Activated CD8-positive, alpha-beta T cell treated with anti-CD3 and anti-CD28 coated beads, Interleukin-2, amount 10 ng/mL, durations not matched to agents 7 days and 5 days (primary cell): ENCODE measurements at regions of chr11 and their contacts with region 1.

Region 1: GRCh38 chr11:57567515-57568329 is at the start of gene UBE2L6:
- DNase-seq: peak; percentile 72
- ATAC-seq: peak; percentile 76
- H3K4me3 Mint-ChIP-seq: peak within 1 kb of the TSS; percentile 97
- H3K27ac Mint-ChIP-seq: peak within 1 kb of the TSS; percentile 93
- H3K4me1 Mint-ChIP-seq: peaks cover 47% of the 10 kb centered on the region
- H3K27me3 Mint-ChIP-seq: no peaks in the 10 kb centered on the region
- total RNA-seq, gene UBE2L6: 222 to 232 TPM

Region 2: GRCh38 chr11:57539342-57539741 is 28.4 kb before region 1 on chr11:
- CTCF ChIA-PET with region 1: no interaction called
- POLR2A ChIA-PET with region 1: no interaction called
- DNase-seq: no peak
- ATAC-seq: no peak
- H3K4me3 Mint-ChIP-seq: no peak overlapping the region
- H3K27ac Mint-ChIP-seq: no peak overlapping the region
- H3K4me1 Mint-ChIP-seq: no peaks in the 10 kb centered on the region
- H3K27me3 Mint-ChIP-seq: no peaks in the 10 kb centered on the region

Region 3: DNA sequence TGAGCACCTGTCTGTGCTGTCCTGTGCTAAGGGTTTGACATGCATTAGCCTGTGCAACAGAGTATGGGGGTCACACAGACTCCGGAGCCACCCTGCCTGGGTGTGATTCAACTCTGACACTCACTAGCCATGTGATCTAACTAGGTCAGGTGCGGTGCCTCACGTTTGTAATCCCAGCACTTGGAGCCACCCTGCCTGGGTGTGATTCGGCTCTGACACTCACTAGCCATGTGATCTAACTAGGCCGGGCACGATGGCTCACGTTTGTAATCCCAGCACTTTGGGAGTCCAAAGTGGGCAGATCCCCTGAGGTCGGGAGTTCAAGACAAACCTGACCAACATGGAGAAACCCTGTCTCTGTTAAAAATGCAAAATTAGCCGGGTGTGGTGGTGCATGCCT is 11.7 kb before region 1 on chr11:
- CTCF ChIA-PET with region 1: interaction called, 15 read pairs
- POLR2A ChIA-PET with region 1: interaction called, 3 read pairs
- DNase-seq: no peak
- ATAC-seq: no peak
- H3K4me3 Mint-ChIP-seq: no peak overlapping the region
- H3K27ac Mint-ChIP-seq: no peak overlapping the region
- H3K4me1 Mint-ChIP-seq: peaks cover 3% of the 10 kb centered on the region
- H3K27me3 Mint-ChIP-seq: no peaks in the 10 kb centered on the region

Region 4: DNA sequence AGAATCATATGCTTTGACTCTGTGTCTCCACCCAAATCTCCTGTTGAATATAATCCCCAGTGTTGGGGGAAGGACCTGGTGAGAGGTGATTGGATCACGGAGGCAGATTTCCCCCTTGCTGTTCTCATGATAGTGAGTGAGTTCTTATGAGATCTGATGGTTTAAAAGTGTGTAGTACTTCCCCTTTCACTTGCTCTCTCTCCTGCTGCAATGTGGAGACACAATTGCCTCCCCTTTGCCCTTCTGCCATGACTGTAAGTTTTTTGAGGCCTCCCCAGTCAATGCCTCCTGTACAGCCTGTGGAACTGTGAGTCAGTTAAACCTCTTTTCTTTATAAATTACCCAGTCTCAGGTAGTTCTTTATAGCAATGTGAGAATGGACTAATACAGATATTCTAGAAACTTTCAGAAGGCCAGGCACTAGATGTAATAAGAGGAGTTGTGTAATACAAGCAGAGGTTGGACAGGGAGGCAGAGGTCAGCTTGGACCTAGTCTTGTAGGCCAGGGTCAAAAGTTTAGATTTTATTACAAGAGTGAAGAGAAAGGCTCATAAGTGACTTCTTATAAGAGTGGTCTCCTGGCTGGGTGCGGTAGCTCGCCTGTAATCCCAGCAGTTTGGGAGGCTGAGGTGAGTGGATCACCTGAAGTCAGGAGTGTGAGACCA is 20.5 kb after region 1 on chr11:
- CTCF ChIA-PET with region 1: no interaction called
- POLR2A ChIA-PET with region 1: no interaction called
- DNase-seq: no peak
- ATAC-seq: no peak
- H3K4me3 Mint-ChIP-seq: no peak overlapping the region
- H3K27ac Mint-ChIP-seq: no peak overlapping the region
- H3K4me1 Mint-ChIP-seq: peaks cover 10% of the 10 kb centered on the region
- H3K27me3 Mint-ChIP-seq: peaks cover 3% of the 10 kb centered on the region

Region 5: GRCh38 chr11:57649826-57650738 is 82.4 kb after region 1 on chr11 and contains the start of gene YPEL4:
- CTCF ChIA-PET with region 1: interaction called, 421 read pairs
- POLR2A ChIA-PET with region 1: interaction called, 8 read pairs
- DNase-seq: peak; percentile 77
- ATAC-seq: peak; percentile 76
- H3K4me3 Mint-ChIP-seq: peak within 1 kb of the TSS; percentile 71
- H3K27ac Mint-ChIP-seq: peak within 1 kb of the TSS; percentile 71
- H3K4me1 Mint-ChIP-seq: peaks cover 61% of the 10 kb centered on the region
- H3K27me3 Mint-ChIP-seq: peaks cover 42% of the 10 kb centered on the region
- total RNA-seq, gene YPEL4: 0.11 to 0.13 TPM